Mammary epithelial cell (primary cell): ENCODE measurements at regions of chr15 and their contacts with region 1.

Region 1: DNA sequence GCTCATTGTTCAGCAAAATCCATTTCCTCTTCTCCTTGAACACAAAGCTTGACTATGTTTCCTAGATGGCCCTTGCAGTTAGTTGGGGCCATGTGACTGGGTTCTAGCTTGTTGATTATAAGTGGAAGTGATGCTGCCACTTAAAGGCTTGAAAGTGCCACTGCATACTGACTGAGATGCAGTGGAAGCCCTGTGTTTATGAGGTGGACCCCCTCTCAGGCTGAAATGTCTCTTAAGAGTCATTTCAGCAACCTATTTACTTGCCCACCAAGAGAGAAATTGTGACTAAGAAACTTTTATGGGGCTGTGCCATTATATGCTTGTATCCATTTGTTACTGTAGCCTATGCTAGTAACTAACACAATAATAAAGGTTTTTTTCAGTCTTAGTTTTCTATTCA is 8.4 kb upstream of the ANP32A start:
- DNase-seq: peak; percentile 6
- H3K4me3 ChIP-seq: no peak overlapping the region
- H3K27ac ChIP-seq: no peak overlapping the region
- H3K4me1 ChIP-seq: no peaks in the 10 kb centered on the region
- H3K27me3 ChIP-seq: peaks cover 3% of the 10 kb centered on the region
- CTCF ChIP-seq: peak; percentile 12 to 65

Region 2: DNA sequence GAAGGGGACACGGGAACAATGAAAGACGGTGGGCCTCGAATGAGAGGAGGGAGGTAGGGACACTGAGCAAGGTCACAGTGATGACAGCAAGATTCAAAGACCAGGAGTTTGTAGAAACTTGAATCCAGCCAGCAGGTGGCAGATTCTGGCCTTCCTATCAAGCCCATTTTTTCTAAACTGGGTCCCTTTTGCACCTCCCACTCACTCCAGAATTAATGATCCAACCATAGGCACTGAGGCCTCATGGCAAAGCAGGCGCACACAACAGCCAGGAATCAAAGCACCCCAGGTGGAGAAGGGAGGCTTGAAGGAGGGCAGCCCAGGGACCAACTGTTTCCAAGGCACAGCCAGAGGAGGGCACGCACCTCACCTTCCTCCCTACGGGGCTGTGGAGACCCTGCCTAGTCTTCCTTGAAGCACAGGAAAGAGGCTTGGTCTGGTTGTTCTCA is 98.6 kb before region 1 on chr15:
- CTCF ChIA-PET with region 1: no interaction called
- dilution Hi-C with region 1: no loop called
- in situ Hi-C with region 1: no loop called
- intact Hi-C with region 1: loop called (anchors 1 kb)
- DNase-seq: peak; percentile 21
- H3K4me3 ChIP-seq: no peak overlapping the region
- H3K27ac ChIP-seq: no peak overlapping the region
- H3K4me1 ChIP-seq: no peaks in the 10 kb centered on the region
- H3K27me3 ChIP-seq: no peaks in the 10 kb centered on the region
- CTCF ChIP-seq: peak in 1 of 2 donors; percentile 72

Region 3: DNA sequence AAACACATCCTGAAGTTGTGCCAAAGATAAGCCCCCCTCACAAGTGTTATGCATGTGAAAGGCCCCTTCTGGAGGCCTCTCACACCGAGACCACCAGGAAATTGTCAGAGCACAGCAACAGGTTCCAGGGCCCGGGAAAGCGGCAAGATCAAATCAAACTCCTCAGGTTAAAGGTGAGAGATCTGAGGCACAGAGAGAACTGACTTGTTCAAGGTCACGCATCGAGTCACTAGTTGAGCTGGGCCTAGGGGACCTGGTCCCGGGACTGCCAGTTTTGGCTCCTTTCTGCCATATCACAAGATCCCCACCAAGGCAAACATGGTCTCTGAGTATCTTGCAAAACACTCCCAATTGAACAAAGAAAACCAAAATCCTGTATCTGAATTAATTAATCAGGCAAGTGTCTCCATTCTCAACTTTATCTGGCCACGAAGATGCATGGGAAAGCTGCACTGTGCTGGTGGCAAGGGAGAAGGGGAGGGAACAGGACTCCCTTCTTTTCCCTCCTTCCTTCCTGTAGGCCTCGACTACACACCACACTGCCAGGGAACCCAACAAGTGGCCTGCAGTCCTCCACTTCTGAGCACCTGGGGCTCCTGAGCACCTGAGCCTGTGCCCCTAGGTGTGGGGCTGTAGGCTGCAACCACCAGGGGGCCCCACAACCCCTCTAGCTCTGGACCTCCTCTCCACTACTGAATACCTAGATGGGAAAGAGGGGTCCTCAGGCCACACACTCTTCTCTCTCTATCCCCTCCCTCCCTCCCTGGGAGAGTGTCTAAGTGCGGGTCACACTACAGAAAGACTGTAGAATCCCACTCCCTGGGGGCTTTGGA is 45.6 kb before region 1 on chr15:
- CTCF ChIA-PET with region 1: interaction called, 5 read pairs
- dilution Hi-C with region 1: no loop called
- in situ Hi-C with region 1: no loop called
- intact Hi-C with region 1: loop called (anchors 1 kb)
- DNase-seq: peak; percentile 27
- H3K4me3 ChIP-seq: no peak overlapping the region
- H3K27ac ChIP-seq: no peak overlapping the region
- H3K4me1 ChIP-seq: peaks cover 19% of the 10 kb centered on the region
- H3K27me3 ChIP-seq: no peaks in the 10 kb centered on the region
- CTCF ChIP-seq: peak; percentile 56 to 81

Region 4: GRCh38 chr15:68991723-68992122 is 162.7 kb after region 1 on chr15:
- CTCF ChIA-PET with region 1: no interaction called
- dilution Hi-C with region 1: no loop called
- in situ Hi-C with region 1: no loop called
- intact Hi-C with region 1: no loop called
- DNase-seq: peak; percentile 70
- H3K4me3 ChIP-seq: no peak overlapping the region
- H3K27ac ChIP-seq: no peak overlapping the region
- H3K4me1 ChIP-seq: peaks cover 38% of the 10 kb centered on the region
- H3K27me3 ChIP-seq: no peaks in the 10 kb centered on the region
- CTCF ChIP-seq: no peak